Endothelial cell of umbilical vein (primary cell): ENCODE measurements at regions of chr18 and their contacts with region 1.

Region 1: DNA sequence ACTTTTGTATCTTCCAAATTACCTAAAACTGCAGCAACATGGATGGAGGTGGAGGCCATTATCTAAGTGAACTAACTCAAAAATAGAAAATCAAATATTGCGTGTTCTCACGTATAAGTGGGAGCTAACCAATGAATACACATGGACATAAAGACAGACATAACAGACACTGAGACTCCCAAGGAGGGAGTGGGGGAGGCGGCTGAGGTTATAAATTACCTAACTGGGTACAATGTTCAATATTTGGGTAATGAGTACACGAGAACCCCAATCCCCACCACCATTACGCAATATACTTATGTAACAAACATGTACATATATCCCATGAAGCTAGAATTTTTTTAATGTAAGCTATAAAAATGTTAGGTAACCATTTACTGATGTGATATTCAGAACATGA is 119.8 kb downstream of the RTTN start:
- DNase-seq: no peak
- H3K4me3 ChIP-seq: no peak overlapping the region
- H3K27ac ChIP-seq: no peak overlapping the region
- H3K4me1 ChIP-seq: no peaks in the 10 kb centered on the region
- H3K27me3 ChIP-seq: no peaks in the 10 kb centered on the region
- CTCF ChIP-seq: no peak
- POLR2A ChIP-seq: no peak

Region 2: DNA sequence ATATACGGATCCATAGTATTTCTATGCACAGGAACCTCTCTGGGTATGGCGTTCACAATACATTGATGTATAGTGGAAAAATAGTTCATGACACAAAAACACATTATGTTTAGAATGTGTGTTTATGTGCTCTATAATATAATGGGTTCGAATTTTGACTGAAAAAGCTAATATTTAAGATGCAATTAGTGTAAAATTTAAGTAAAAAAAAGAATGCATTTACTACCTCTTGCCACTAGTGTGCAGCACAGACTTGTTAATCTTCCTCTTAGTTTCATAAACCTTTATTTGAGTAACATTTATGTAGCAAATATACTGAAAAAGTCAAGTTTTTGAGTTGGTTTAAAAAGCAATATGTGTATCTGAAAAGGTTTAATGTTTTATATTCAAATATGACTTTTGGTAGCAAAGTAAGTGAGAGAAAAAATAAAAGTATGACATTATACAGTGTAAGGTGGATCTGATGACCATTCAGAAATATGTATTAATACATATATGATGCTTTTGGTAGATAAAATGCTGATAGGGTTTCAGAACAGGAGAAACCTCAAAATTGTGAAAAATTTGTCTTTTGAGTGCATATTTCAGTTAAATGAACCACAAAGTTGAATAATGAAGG is 1238.3 kb before region 1 on chr18:
- CTCF ChIA-PET with region 1: interaction called, 91 read pairs
- POLR2A ChIA-PET with region 1: no interaction called
- dilution Hi-C with region 1: no loop called
- intact Hi-C with region 1: loop called (anchors 1 kb)
- DNase-seq: peak; percentile 64
- H3K4me3 ChIP-seq: no peak overlapping the region
- H3K27ac ChIP-seq: no peak overlapping the region
- H3K4me1 ChIP-seq: no peaks in the 10 kb centered on the region
- H3K27me3 ChIP-seq: no peaks in the 10 kb centered on the region
- CTCF ChIP-seq: peak; percentile 33 to 45
- POLR2A ChIP-seq: no peak

Region 3: GRCh38 chr18:69636529-69637301 is 448.9 kb before region 1 on chr18:
- CTCF ChIA-PET with region 1: no interaction called
- POLR2A ChIA-PET with region 1: no interaction called
- dilution Hi-C with region 1: no loop called
- intact Hi-C with region 1: loop called (anchors 2 kb)
- DNase-seq: peak; percentile 2
- H3K4me3 ChIP-seq: no peak overlapping the region
- H3K27ac ChIP-seq: no peak overlapping the region
- H3K4me1 ChIP-seq: no peaks in the 10 kb centered on the region
- H3K27me3 ChIP-seq: no peaks in the 10 kb centered on the region
- CTCF ChIP-seq: peak in 1 of 2 donors; percentile 9
- POLR2A ChIP-seq: no peak

Region 4: DNA sequence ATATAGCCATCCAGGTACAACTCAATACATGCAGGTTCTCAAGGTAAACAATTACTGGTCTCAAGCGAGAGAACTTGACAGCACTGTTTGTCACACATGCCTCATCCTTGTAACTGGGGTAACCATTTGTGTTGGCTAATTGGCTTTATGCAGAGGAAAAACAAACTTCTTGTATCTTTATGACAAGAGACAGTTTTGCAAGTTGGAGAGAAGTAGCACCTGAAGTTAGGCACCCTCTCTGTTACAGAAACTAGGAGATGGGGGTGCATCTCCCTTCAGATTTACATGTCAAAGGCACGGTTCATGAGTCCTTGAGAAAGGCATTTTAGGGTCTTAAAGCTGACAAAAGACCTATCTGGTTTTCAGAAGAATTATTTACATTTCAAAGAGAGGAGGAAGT is 379.7 kb before region 1 on chr18:
- CTCF ChIA-PET with region 1: no interaction called
- POLR2A ChIA-PET with region 1: no interaction called
- dilution Hi-C with region 1: no loop called
- intact Hi-C with region 1: no loop called
- DNase-seq: no peak
- H3K4me3 ChIP-seq: no peak overlapping the region
- H3K27ac ChIP-seq: no peak overlapping the region
- H3K4me1 ChIP-seq: no peaks in the 10 kb centered on the region
- H3K27me3 ChIP-seq: no peaks in the 10 kb centered on the region
- CTCF ChIP-seq: no peak
- POLR2A ChIP-seq: no peak

Region 5: GRCh38 chr18:70154591-70155194 is 69.1 kb after region 1 on chr18:
- CTCF ChIA-PET with region 1: no interaction called
- POLR2A ChIA-PET with region 1: no interaction called
- dilution Hi-C with region 1: no loop called
- intact Hi-C with region 1: no loop called
- DNase-seq: no peak
- H3K4me3 ChIP-seq: no peak overlapping the region
- H3K27ac ChIP-seq: no peak overlapping the region
- H3K4me1 ChIP-seq: peaks cover 2% of the 10 kb centered on the region
- H3K27me3 ChIP-seq: no peaks in the 10 kb centered on the region
- CTCF ChIP-seq: no peak
- POLR2A ChIP-seq: no peak